ENCODE measurements at regions of chr6 and their contacts with region 1.

Region 1: DNA sequence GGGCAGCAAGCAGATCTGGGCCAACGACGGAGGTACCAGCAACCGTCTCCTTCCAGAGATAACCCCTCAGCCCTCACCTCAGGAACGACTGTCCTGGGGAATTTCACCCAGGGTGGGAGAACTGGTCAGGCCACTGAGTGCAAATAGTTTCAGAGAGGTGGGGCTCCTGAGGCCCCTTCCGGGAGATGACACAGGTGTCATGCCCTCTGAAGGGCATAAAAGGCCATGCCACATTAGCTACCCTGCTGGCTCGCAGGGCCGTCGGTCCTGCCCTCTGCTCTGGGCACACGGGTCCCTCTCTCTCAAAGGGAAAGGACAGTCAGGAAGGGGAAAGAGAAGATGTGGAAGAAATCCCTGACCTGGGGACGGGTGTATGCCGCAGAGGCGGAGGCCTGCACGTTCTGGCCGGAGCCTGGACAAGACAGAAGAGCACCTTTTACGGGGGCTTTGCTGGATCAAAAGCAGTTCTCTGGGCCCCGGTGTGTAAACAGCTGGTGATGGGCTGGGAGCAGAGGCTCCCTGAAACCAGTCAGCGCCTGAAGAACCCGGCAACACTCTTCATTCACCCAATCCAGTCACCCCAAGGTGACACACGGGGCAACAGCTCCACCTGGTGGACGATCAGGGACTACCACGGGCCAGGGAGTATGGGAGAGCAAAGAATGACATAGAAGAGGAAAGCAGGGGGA is 6.4 kb upstream of the TAF8 start:
- DNase-seq: peak; percentile 68 to 89
- H3K4me3 ChIP-seq: no peak overlapping the region
- H3K27ac ChIP-seq: no peak overlapping the region
- H3K4me1 ChIP-seq: peaks cover 41% of the 10 kb centered on the region
- H3K27me3 ChIP-seq: no peaks in the 10 kb centered on the region
- CTCF ChIP-seq: peak; percentile 96

Region 2: DNA sequence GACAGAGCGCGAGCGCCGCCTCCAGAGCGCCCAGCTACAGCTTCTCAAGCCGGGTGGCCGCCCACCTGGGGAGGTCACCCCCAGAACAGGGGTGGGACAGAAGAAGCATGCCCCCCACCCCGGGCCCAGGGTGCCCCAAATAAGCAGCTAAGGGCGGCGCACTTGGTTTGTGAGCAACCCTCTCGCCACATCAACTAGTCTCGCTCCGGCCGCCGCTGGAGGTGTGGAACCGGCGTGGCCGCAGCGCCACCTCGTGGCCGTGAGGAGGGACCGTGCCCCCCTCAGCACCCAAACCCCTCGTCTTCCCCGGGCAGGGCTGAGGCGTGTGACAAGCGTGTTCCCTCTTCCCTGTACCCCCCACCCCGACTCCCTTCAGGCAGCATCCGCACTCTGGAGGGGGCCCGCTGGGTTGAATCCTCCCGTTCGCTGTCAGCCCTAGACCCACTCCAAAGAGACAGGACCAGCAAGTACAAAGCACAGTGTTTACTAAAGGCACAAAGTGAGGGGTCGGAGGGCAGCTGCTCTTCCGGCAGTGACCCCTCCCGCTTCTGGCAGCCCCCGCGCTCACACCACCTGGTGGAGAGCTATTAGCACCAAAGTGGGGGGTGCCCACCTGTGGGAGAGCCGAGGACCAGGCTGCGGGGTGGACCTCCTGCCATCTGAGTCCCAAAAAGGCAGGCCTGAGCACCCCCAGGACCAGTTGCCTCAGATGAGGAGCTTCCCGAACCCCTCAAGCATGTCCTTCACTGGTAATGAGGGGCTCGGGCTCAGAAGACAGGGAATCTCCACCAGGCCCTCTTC is 360.2 kb before region 1 on chr6:
- CTCF ChIA-PET with region 1: interaction called, 5 read pairs
- POLR2A ChIA-PET with region 1: no interaction called
- intact Hi-C with region 1: loop called (anchors 5 kb)
- DNase-seq: peak in 1 of 2 experiments; percentile 72
- H3K4me3 ChIP-seq: peak overlapping the region; percentile 31; the same call in 1 of the 2 replicates
- H3K27ac ChIP-seq: no peak overlapping the region
- H3K4me1 ChIP-seq: peaks cover 14% of the 10 kb centered on the region; the same call in 1 of the 2 replicates
- H3K27me3 ChIP-seq: no peaks in the 10 kb centered on the region
- CTCF ChIP-seq: peak; percentile 86

Region 3: DNA sequence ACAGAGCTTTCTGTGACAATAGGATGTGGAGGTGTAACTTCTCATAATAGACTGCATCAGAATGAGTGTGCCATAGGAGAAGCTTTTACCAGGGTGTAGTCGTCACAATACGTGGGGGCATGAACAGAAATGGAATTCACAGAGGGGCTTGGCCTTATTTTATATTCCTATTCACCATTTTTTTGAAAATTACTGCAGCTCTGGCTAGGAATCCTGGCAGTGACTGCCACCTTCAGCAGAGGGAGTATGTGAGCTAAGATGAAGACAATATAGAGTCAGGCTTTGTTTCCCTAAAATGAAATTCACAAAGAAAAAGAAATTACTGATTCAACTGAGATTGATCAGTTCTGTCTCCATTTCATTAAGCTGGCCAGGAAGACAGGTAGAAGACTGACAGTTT is 242.6 kb before region 1 on chr6:
- CTCF ChIA-PET with region 1: interaction called, 9 read pairs
- POLR2A ChIA-PET with region 1: interaction called, 7 read pairs
- intact Hi-C with region 1: loop called (anchors 1 kb)
- DNase-seq: peak in 1 of 2 experiments; percentile 25
- H3K4me3 ChIP-seq: no peak overlapping the region
- H3K27ac ChIP-seq: no peak overlapping the region
- H3K4me1 ChIP-seq: no peaks in the 10 kb centered on the region
- H3K27me3 ChIP-seq: no peaks in the 10 kb centered on the region
- CTCF ChIP-seq: peak; percentile 72

Region 4: GRCh38 chr6:41920921-41921711 is 122.8 kb before region 1 on chr6 and contains the starts of genes BYSL and MED20:
- CTCF ChIA-PET with region 1: interaction called, 6 read pairs
- POLR2A ChIA-PET with region 1: interaction called, 7 read pairs
- intact Hi-C with region 1: loop called (anchors 1 kb)
- DNase-seq: peak; percentile 89 to 92
- H3K4me3 ChIP-seq: peak within 1 kb of the TSS; percentile 63
- H3K27ac ChIP-seq: peak within 1 kb of the TSS; percentile 88
- H3K4me1 ChIP-seq: peaks cover 42% of the 10 kb centered on the region
- H3K27me3 ChIP-seq: no peaks in the 10 kb centered on the region
- CTCF ChIP-seq: peak; percentile 99
- total RNA-seq, gene BYSL: 33.0 and 36.5 TPM in 2 replicates
- total RNA-seq, gene MED20: 45.8 and 61.8 TPM in 2 replicates

Region 5: GRCh38 chr6:41941280-41942066 is 102.5 kb before region 1 on chr6 and contains the start of gene CCND3:
- CTCF ChIA-PET with region 1: interaction called, 4 read pairs
- POLR2A ChIA-PET with region 1: no interaction called
- intact Hi-C with region 1: loop called (anchors 1 kb)
- DNase-seq: peak; percentile 69 to 89
- H3K4me3 ChIP-seq: peak within 1 kb of the TSS; percentile 78
- H3K27ac ChIP-seq: peak within 1 kb of the TSS; percentile 72
- H3K4me1 ChIP-seq: peaks cover 27% of the 10 kb centered on the region
- H3K27me3 ChIP-seq: no peaks in the 10 kb centered on the region
- CTCF ChIP-seq: no peak
- total RNA-seq, gene CCND3: 70.5 and 75.1 TPM in 2 replicates